Heart left ventricle (tissue), 16 donors: ENCODE measurements at regions of chr22 and their contacts with region 1.

Region 1: GRCh38 chr22:36194971-36195370 is 6.6 kb downstream of the APOL4 start:
- DNase-seq: peak; percentile 68 to 76 (median 72)
- ATAC-seq: peak; percentile 23 to 60 (median 48)
- H3K4me3 ChIP-seq: no peak overlapping the region
- H3K27ac ChIP-seq: peak overlapping the region in 1 of 12 donors; percentile 1
- H3K4me1 ChIP-seq: peaks cover 0 to 73% (median 35%) of the 10 kb centered on the region in 12 donors
- H3K27me3 ChIP-seq: no peaks in the 10 kb centered on the region
- CTCF ChIP-seq: peak; percentile 58 to 89 (median 80)
- POLR2A ChIP-seq: no peak

Region 2: DNA sequence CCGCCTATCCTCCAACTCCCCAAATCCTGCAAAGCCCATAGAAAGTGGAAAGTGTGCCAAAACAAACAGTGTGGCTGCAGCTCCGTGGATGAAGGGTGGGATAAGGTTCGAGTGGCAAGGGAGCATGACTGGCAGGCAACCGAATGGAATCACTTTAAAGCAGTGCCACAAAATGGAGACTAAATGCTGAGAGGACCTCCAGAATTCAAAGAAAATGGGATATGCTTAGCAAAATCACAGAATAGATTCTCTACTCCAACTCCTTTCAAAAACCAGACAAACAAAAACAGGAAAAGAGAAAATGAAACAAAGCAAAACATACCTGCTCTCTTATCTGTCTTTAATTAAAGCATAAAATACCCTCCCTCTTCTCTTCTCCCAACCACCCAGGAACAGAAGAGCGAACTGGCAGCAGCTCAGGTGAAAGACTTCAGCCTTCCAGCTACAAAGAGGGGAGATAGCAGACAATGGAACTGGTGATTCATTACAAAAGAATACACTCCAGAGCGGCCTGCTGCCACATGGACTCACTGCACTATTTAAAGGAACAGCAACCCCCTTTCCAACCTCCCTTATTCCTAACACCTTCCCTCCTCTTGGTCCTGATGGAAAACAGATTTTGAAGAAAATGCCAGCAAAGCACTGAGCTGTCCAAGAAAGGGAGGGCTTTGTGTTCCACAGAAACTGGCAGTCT is 358.8 kb before region 1 on chr22:
- intact Hi-C with region 1: no loop called
- DNase-seq: peak; percentile 51 to 74 (median 58)
- ATAC-seq: peak; percentile 70 to 88 (median 86)
- H3K4me3 ChIP-seq: peak overlapping the region in 10 of 12 donors; percentile 17 to 51 (median 41)
- H3K27ac ChIP-seq: peak overlapping the region; percentile 43 to 86 (median 78)
- H3K4me1 ChIP-seq: peaks cover 5 to 85% (median 66%) of the 10 kb centered on the region in 12 donors
- H3K27me3 ChIP-seq: no peaks in the 10 kb centered on the region
- CTCF ChIP-seq: no peak
- POLR2A ChIP-seq: no peak

Region 3: DNA sequence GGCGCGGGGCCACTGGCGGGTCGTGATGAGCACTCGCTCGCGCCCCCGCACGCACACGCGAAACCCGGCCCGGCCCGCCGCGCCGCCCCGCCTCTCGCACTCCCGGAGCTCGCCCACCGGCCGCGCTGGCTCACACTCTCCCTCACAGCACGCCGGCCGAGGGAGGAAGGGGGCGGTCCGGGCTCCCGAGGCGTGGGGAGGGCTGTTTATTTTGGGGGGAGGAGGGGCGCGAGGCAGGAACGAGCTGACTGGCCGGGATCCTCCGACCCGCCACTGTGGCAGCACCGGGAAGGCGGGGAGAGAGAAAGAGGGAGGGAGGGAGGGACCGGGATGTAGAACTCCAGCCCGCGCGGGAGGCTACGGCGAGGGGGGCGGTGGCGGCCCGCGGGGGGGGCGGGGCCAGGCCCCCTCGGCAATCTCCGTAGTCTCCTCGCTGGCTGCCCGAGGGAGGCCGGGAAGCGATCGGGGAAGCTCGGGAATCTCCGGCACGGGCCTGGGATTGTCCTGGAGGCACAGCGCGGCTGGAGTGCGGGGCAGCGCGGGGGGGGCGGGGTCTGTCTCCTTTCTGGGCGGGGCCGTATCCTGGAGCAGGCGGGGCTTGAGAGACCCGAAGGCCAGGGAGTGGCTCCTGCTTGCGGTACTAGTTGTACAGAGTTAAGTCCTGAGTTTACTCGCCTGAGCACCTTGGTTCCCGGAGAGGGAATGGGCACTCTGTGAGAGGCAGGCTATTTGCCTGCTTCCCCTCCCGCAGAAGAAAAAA is 166.1 kb before region 1 on chr22 and contains the start of gene RBFOX2:
- intact Hi-C with region 1: no loop called
- DNase-seq: peak; percentile 97 to 98 (median 98)
- ATAC-seq: peak; percentile 93 to 98 (median 96)
- H3K4me3 ChIP-seq: peak within 1 kb of the TSS; percentile 66 to 93 (median 83)
- H3K27ac ChIP-seq: peak within 1 kb of the TSS; percentile 58 to 94 (median 91)
- H3K4me1 ChIP-seq: peaks cover 0 to 32% (median 12%) of the 10 kb centered on the region in 12 donors
- H3K27me3 ChIP-seq: no peaks in the 10 kb centered on the region
- CTCF ChIP-seq: no peak
- POLR2A ChIP-seq: peak in 1 of 2 donors; percentile 65
- total RNA-seq, gene RBFOX2: 71.0 to 102 (median 84.8) TPM

Region 4: DNA sequence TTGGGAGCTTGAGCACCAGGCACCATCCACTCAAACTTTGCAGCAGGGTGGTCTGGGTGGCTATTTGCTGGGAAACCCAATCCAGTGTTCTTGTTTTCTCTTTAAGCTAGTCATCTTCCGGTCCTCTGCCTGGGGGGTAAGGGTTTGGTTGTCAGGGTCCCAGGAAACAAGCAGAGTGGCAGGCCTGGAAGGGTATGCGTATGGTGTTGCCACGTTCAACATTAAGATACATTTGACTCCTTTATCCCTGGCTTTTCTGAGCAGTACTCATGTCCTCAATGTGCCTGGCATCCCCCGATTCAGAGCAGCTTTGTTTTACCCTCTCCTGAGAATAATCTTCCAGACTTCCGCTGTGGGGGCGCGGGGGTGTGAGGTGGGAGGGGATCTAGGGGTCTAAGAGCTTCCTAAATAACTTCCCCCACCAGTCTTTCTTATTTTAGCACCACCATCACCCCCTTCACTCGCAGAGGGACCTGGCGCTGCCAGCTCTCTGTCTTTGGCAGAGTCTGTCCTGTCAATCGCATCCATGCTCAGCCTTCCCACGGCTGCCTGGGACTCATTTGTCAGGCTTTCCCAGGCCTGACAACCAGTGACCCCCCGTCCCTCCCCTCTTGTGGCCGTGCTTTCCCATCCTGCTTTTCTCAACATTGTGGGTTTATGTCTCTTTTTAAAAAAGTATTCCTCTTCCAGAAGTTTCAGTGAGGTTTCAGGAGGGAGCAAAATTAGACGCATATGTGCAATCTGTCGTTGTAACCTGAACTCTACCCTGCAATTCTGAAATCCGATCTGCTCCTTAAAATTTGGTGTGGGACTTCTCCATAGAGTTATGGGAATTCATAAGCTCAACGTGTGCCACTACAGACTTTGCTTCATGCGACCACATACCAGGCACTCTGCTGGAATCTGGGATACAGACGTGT is 139.3 kb before region 1 on chr22:
- intact Hi-C with region 1: no loop called
- DNase-seq: peak in 4 of 5 donors; percentile 19 to 41 (median 31)
- ATAC-seq: peak in 3 of 4 donors; percentile 73 to 79 (median 75)
- H3K4me3 ChIP-seq: no peak overlapping the region
- H3K27ac ChIP-seq: peak overlapping the region in 2 of 12 donors; percentile 2 to 45
- H3K4me1 ChIP-seq: peaks cover 0 to 13% (median 0%) of the 10 kb centered on the region in 12 donors
- H3K27me3 ChIP-seq: no peaks in the 10 kb centered on the region
- CTCF ChIP-seq: no peak
- POLR2A ChIP-seq: no peak

Region 5: DNA sequence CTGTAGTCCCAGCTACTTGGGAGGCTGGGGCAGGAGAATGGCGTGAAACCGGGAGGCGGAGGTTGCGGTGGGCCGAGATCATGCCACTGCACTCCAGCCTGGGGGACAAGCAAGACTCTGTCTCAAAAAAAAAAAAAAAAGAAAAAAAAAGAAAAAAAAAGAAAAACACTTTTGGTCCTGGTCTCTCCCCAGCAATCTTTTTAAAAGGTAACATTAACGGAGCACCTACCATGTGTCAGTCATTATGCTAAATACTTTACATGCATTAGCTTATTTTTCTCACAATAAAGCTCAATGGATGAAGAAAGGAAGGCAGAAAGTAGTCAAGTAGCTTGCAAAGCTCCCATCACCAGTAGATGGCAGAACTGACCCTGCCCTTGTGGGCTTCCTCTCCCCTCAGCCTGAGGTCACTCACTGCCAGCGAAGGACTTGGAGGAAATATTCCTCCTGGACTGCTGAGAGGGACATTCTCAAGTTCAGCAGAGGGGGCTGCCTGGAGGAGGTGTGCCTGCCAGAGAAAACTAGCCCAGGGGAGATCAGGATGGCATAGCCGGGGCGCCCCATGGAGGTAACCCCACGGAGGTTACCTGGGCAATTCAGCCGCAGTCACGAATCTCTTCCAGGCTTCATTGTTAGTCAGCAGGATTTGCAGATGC is 50.0 kb before region 1 on chr22:
- intact Hi-C with region 1: no loop called
- DNase-seq: peak in 4 of 5 donors; percentile 50 to 72 (median 68)
- ATAC-seq: peak; percentile 67 to 85 (median 84)
- H3K4me3 ChIP-seq: no peak overlapping the region
- H3K27ac ChIP-seq: peak overlapping the region in 5 of 12 donors; percentile 1 to 32 (median 4)
- H3K4me1 ChIP-seq: peaks cover 2 to 40% (median 23%) of the 10 kb centered on the region in 12 donors
- H3K27me3 ChIP-seq: no peaks in the 10 kb centered on the region
- CTCF ChIP-seq: peak; percentile 65 to 92 (median 80)
- POLR2A ChIP-seq: no peak

Region 6: GRCh38 chr22:36215981-36216380 is 21.0 kb after region 1 on chr22:
- intact Hi-C with region 1: loop called in 2 of 10 experiments (anchors 2 kb)
- DNase-seq: no peak
- ATAC-seq: no peak
- H3K4me3 ChIP-seq: no peak overlapping the region
- H3K27ac ChIP-seq: no peak overlapping the region
- H3K4me1 ChIP-seq: peaks cover 0 to 39% (median 3%) of the 10 kb centered on the region in 12 donors
- H3K27me3 ChIP-seq: no peaks in the 10 kb centered on the region
- CTCF ChIP-seq: no peak
- POLR2A ChIP-seq: no peak

Region 7: GRCh38 chr22:36239401-36240171 is 44.6 kb after region 1 on chr22 and contains the start of gene APOL2:
- intact Hi-C with region 1: loop called in 7 of 10 experiments (anchors 5 kb)
- DNase-seq: peak; percentile 90 to 95 (median 92)
- ATAC-seq: peak; percentile 94 to 98 (median 96)
- H3K4me3 ChIP-seq: peak within 1 kb of the TSS; percentile 56 to 86 (median 72)
- H3K27ac ChIP-seq: peak within 1 kb of the TSS; percentile 78 to 98 (median 92)
- H3K4me1 ChIP-seq: peaks cover 14 to 64% (median 52%) of the 10 kb centered on the region in 12 donors
- H3K27me3 ChIP-seq: no peaks in the 10 kb centered on the region
- CTCF ChIP-seq: peak; percentile 50 to 88 (median 72)
- POLR2A ChIP-seq: peak; percentile 10 to 88
- total RNA-seq, gene APOL2: 26.6 to 213 (median 55.9) TPM

Region 8: GRCh38 chr22:36286471-36287224 is 91.7 kb after region 1 on chr22:
- intact Hi-C with region 1: loop called in 3 of 10 experiments (anchors 2 to 5 kb)
- DNase-seq: peak; percentile 75 to 85 (median 79)
- ATAC-seq: peak; percentile 74 to 88 (median 79)
- H3K4me3 ChIP-seq: no peak overlapping the region
- H3K27ac ChIP-seq: peak overlapping the region in 10 of 12 donors; percentile 25 to 88 (median 60)
- H3K4me1 ChIP-seq: peaks cover 0 to 24% (median 13%) of the 10 kb centered on the region in 12 donors
- H3K27me3 ChIP-seq: no peaks in the 10 kb centered on the region
- CTCF ChIP-seq: peak; percentile 75 to 96 (median 88)
- POLR2A ChIP-seq: no peak

Region 9: GRCh38 chr22:36486619-36487384 is 291.8 kb after region 1 on chr22:
- intact Hi-C with region 1: loop called in 5 of 10 experiments (anchors 2 to 10 kb)
- DNase-seq: peak in 3 of 5 donors; percentile 46 to 54 (median 53)
- ATAC-seq: no peak
- H3K4me3 ChIP-seq: no peak overlapping the region
- H3K27ac ChIP-seq: no peak overlapping the region
- H3K4me1 ChIP-seq: peaks cover 0 to 10% (median 6%) of the 10 kb centered on the region in 12 donors
- H3K27me3 ChIP-seq: no peaks in the 10 kb centered on the region
- CTCF ChIP-seq: peak; percentile 52 to 78 (median 64)
- POLR2A ChIP-seq: no peak